IMR-90 (cell line): ENCODE measurements at regions of chr6 and their contacts with region 1.

Region 1: GRCh38 chr6:118656847-118657451 is 5.6 kb upstream of the CEP85L start:
- DNase-seq: no peak
- ATAC-seq: no peak
- H3K4me3 ChIP-seq: no peak overlapping the region
- H3K27ac ChIP-seq: no peak overlapping the region
- H3K4me1 ChIP-seq: no peaks in the 10 kb centered on the region; the same call in 1 of the 2 replicates
- H3K27me3 ChIP-seq: no peaks in the 10 kb centered on the region
- CTCF ChIP-seq: no peak
- POLR2A ChIP-seq: no peak
- RAD21 ChIP-seq: no peak

Region 2: GRCh38 chr6:118709859-118710350 is 53.0 kb after region 1 on chr6:
- CTCF ChIA-PET with region 1: no interaction called
- POLR2A ChIA-PET with region 1: interaction called, 15 read pairs
- dilution Hi-C with region 1: no loop called
- in situ Hi-C with region 1: no loop called
- intact Hi-C with region 1: no loop called
- DNase-seq: peak; percentile 86
- ATAC-seq: peak; percentile 30; the same call in 1 of the 2 replicates
- H3K4me3 ChIP-seq: peak overlapping the region; percentile 30; the same call in 1 of the 2 replicates
- H3K27ac ChIP-seq: peak overlapping the region; percentile 67
- H3K4me1 ChIP-seq: peaks cover 10% of the 10 kb centered on the region
- H3K27me3 ChIP-seq: no peaks in the 10 kb centered on the region
- CTCF ChIP-seq: no peak
- POLR2A ChIP-seq: no peak
- RAD21 ChIP-seq: no peak

Region 3: DNA sequence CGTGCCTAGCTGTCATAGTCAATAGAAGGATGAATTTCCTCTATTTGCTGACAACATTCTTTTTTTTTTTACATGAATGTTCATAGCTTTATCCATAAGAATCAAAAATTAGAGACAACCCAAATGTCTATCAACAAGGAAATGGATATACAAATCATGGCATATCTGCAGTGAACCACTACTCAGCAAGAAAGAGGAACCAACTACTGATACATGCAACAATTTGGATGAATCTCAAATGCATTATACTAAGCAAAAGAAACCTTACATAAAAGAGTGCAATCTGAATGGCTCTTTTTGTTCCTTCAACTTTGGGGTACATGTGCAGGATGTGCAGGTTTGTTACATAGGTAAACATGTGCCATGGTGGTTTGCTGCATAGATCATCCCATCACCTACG is 295.7 kb after region 1 on chr6:
- CTCF ChIA-PET with region 1: no interaction called
- POLR2A ChIA-PET with region 1: no interaction called
- dilution Hi-C with region 1: no loop called
- in situ Hi-C with region 1: no loop called
- intact Hi-C with region 1: no loop called
- DNase-seq: no peak
- ATAC-seq: no peak
- H3K4me3 ChIP-seq: no peak overlapping the region
- H3K27ac ChIP-seq: no peak overlapping the region
- H3K4me1 ChIP-seq: no peaks in the 10 kb centered on the region
- H3K27me3 ChIP-seq: no peaks in the 10 kb centered on the region; the same call in 1 of the 2 replicates
- CTCF ChIP-seq: no peak
- POLR2A ChIP-seq: no peak
- RAD21 ChIP-seq: no peak